Psoas muscle (tissue), 8 donors: ENCODE measurements at regions of chr19 and their contacts with region 1.

Region 1: GRCh38 chr19:47157431-47158321 is 27.0 kb downstream of the SAE1 start:
- DNase-seq: peak in 1 of 2 donors; percentile 32
- ATAC-seq: peak; percentile 65 to 88 (median 74)
- H3K4me3 ChIP-seq: peak overlapping the region; percentile 22
- H3K27ac ChIP-seq: peak overlapping the region; percentile 72
- H3K4me1 ChIP-seq: peaks cover 20% of the 10 kb centered on the region
- H3K27me3 ChIP-seq: no peaks in the 10 kb centered on the region
- CTCF ChIP-seq: peak; percentile 5

Region 2: DNA sequence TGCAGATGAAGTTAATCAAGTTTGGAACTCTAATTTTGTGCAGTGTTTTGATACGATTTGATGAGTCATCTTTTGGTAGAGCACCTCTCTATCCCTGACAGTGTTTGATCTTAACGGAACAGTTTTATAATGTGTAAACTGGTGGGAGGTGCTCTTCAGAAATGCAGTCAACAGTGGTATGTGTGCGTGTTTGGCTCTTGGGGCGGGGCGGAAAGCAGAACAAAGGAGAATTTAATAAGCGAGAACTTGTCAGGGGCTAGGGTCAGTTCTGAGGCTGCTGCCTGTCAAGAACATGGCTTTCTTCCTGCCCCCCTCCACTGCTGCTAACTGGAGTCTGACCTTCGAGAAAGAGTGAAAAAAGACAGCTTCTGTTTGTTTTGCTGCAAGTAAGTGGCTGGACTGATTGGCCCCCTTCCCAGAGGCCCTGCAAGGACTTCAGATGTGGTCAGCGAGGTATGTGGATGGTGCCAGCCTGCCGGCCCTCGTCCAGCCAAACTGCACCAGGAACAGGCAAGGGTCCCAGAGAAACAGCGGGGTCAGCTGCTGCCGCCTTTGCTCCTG is 32.6 kb after region 1 on chr19:
- intact Hi-C with region 1: loop called in 1 of 2 experiments (anchors 5 kb)
- DNase-seq: peak; percentile 46 to 50
- ATAC-seq: peak; percentile 40 to 61 (median 53)
- H3K4me3 ChIP-seq: peak overlapping the region; percentile 22
- H3K27ac ChIP-seq: peak overlapping the region; percentile 28
- H3K4me1 ChIP-seq: peaks cover 20% of the 10 kb centered on the region
- H3K27me3 ChIP-seq: no peaks in the 10 kb centered on the region
- CTCF ChIP-seq: no peak

Region 3: DNA sequence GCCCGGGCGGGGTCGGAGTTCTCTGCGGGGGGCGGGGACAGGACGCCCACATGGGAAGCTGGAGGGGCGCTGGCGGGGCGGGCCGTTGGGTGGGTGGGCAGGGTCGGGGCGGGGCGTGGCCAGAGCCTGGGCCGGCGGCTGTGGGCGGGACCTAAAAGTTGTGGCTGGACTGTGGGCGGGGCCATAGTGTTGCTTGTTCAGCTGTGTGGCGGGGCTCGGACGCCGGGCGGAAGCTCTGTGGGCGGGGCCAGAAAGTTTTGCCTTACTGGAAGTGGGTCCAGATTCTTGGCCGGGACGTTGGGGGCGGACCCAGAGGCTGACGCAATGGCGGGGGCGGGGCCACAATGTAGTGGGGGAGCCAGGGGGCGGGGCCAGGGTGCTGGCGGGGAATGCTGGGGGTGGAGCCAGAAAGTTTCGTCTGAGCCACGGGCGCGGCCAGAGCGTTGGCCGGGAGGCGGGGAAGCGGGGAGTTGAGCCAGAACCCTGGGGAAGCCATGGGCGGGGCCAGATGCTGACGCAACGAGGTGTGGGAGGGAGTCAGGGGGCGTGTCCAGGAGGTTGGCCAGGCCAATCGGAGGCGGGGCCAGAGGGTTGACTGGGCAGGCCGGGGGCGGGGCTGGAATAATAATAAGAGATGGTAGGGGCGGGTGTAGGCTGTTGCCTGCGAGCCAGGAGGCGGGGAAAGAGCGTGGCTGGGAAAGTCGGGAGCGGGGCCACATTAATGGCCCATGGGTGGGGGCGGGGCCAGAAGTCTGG is 99.2 kb after region 1 on chr19:
- intact Hi-C with region 1: loop called in 1 of 2 experiments (anchors 5 kb)
- DNase-seq: peak; percentile 100
- ATAC-seq: peak; percentile 82 to 86 (median 85)
- H3K4me3 ChIP-seq: peak overlapping the region; percentile 68
- H3K27ac ChIP-seq: peak overlapping the region; percentile 89
- H3K4me1 ChIP-seq: peaks cover 30% of the 10 kb centered on the region
- H3K27me3 ChIP-seq: no peaks in the 10 kb centered on the region
- CTCF ChIP-seq: no peak